ENCODE measurements at regions of chr1 and their contacts with region 1.

Region 1: DNA sequence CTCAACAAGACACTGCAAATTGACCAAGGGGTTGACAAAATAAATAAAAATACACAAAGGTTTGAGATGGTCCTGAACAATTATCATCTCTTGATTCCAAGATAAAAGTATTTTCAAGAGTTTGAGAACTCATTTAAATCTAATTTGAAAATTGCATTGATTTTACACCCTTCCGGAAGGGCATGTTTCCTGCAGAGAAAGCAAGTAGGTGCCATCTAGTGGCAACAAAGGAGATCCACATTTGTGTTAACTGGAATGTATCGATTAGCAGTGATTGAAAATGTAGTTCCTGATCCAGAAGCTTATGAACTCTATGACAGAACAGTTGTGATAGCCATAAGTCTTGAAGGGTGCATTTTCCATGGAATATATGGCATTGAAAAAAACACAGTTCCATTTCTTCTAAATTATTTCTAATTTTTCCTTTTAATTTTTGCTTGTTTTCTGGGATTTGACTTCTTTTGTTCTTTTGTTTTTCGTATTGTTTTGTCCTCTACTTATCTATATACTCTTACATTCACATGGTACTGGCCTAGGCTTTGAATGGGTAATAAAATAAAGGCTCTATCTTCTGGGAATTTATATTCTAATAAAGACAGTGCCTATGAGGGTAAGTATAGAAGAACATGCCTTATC is 143.7 kb downstream of the DNM3 start:
- DNase-seq: no peak
- ATAC-seq: no peak
- H3K4me3 Mint-ChIP-seq: no peak overlapping the region
- H3K27ac Mint-ChIP-seq: no peak overlapping the region
- H3K4me1 Mint-ChIP-seq: no peaks in the 10 kb centered on the region
- H3K27me3 Mint-ChIP-seq: no peaks in the 10 kb centered on the region
- CTCF ChIP-seq: peak; percentile 59

Region 2: DNA sequence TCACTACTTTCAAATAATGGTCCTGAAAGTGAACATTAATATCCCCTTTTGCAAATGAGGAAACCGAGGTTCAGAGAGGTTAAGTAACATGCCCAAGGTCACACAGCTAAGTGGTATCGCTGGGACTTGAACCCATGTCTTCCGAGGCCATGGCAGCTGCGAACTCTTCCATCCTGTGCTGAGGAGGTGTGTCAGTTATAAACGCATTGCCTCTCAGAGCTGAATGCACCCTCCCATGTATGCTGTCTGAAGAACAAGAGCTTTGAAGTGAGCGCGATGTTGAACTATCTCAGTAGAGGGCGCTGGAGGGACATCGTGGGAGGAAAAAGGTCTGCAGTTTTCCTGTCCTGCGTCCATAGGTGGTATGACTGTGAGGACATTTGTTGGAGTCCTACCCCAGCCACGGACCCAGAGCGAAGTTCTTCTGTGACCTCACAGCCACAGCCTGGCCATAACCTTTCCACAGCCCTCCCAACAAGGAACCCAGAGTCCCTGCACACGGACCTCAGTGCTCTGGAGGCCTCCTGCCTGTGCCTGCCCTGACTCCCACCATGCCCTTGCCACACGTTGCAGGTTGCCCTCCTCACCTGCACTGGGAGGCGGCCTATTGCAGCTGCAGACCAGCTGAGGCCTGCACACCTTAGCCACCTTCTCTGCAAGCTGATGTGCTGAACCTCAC is 340.0 kb before region 1 on chr1:
- CTCF ChIA-PET with region 1: interaction called, 28 read pairs
- POLR2A ChIA-PET with region 1: no interaction called
- intact Hi-C with region 1: loop called (anchors 1 kb)
- DNase-seq: no peak
- ATAC-seq: peak; percentile 31
- H3K4me3 Mint-ChIP-seq: no peak overlapping the region
- H3K27ac Mint-ChIP-seq: no peak overlapping the region
- H3K4me1 Mint-ChIP-seq: peaks cover 4% of the 10 kb centered on the region
- H3K27me3 Mint-ChIP-seq: no peaks in the 10 kb centered on the region
- CTCF ChIP-seq: no peak

Region 3: DNA sequence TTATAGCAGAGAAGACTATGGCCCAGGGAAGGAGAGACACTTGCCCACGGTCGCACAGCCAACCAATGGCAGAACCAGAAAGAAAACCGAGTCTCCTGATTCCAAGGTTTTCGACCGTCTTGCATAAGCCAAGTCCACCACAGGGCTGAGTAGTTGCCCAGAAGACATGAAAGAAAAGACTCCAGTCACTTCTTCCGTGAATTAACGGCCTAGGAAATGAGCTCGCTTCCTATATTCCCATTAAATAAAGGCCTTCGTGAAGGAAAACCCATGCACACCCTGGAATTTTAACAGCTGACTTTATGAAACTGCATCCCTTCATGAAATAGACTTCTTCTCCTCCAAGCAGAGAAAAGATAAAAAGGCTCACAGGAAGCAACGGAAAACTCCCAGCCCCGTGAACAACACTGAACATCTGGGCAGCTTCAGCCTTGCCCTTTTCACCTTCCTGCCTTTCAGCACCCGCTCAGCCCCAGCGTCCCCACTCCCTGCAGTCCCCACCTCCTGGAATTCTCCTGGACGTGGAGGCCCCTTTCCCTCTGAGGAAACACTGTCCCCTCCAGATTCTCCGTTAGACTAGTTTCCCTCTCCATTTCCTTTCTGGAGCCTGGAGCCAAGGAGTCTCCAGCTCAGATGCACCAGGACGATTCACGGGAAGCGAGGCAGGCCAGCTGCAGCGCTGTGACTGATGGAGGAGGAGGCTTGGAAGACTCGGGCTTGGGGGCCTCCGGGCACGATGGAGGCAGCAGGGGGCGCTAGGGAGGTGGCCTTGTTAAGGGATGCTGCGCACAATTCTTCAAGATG is 329.8 kb before region 1 on chr1:
- CTCF ChIA-PET with region 1: interaction called, 3 read pairs
- POLR2A ChIA-PET with region 1: no interaction called
- intact Hi-C with region 1: loop called (anchors 1 kb)
- DNase-seq: peak; percentile 26
- ATAC-seq: no peak
- H3K4me3 Mint-ChIP-seq: no peak overlapping the region
- H3K27ac Mint-ChIP-seq: no peak overlapping the region
- H3K4me1 Mint-ChIP-seq: peaks cover 8% of the 10 kb centered on the region
- H3K27me3 Mint-ChIP-seq: peaks cover 39% of the 10 kb centered on the region
- CTCF ChIP-seq: no peak

Region 4: GRCh38 chr1:171801487-171801891 is 183.5 kb before region 1 on chr1:
- CTCF ChIA-PET with region 1: interaction called, 160 read pairs
- POLR2A ChIA-PET with region 1: no interaction called
- intact Hi-C with region 1: loop called (anchors 1 kb)
- DNase-seq: no peak
- ATAC-seq: no peak
- H3K4me3 Mint-ChIP-seq: no peak overlapping the region
- H3K27ac Mint-ChIP-seq: no peak overlapping the region
- H3K4me1 Mint-ChIP-seq: peaks cover 15% of the 10 kb centered on the region
- H3K27me3 Mint-ChIP-seq: no peaks in the 10 kb centered on the region
- CTCF ChIP-seq: no peak

Region 5: GRCh38 chr1:171877701-171878100 is 107.3 kb before region 1 on chr1:
- CTCF ChIA-PET with region 1: no interaction called
- POLR2A ChIA-PET with region 1: no interaction called
- intact Hi-C with region 1: no loop called
- DNase-seq: no peak
- ATAC-seq: no peak
- H3K4me3 Mint-ChIP-seq: no peak overlapping the region
- H3K27ac Mint-ChIP-seq: no peak overlapping the region
- H3K4me1 Mint-ChIP-seq: no peaks in the 10 kb centered on the region
- H3K27me3 Mint-ChIP-seq: peaks cover 7% of the 10 kb centered on the region
- CTCF ChIP-seq: no peak

Measured in activated B cell treated with CpG ODN at 0.5 μM for 24 hours (primary cell).